ENCODE measurements at regions of chr19 and their contacts with region 1.

Region 1: DNA sequence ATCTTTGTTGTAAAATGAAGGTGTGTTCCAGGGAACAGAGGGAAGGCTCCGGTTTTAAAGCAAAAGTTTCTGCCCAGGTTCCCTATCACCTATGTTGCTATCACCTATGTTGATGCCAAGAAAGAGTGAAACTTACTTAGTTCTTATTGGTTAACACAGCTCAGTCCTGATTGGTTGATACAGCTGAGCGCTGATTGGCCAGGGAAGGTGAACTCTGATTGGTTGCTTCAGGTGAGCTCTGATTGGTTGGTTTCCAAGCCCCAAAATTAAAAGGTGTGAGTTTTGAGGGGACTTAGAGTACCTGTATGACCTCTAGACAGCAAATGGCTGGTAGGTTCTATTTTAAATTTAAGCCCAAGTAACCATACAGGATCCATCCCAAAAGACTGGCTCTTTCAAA is 42.2 kb downstream of the FPR3 start:
- DNase-seq: no peak
- H3K4me3 ChIP-seq: no peak overlapping the region
- H3K27ac ChIP-seq: no peak overlapping the region
- H3K4me1 ChIP-seq: no peaks in the 10 kb centered on the region
- H3K27me3 ChIP-seq: no peaks in the 10 kb centered on the region
- CTCF ChIP-seq: no peak
- EP300 ChIP-seq: no peak
- POLR2A ChIP-seq: no peak

Region 2: DNA sequence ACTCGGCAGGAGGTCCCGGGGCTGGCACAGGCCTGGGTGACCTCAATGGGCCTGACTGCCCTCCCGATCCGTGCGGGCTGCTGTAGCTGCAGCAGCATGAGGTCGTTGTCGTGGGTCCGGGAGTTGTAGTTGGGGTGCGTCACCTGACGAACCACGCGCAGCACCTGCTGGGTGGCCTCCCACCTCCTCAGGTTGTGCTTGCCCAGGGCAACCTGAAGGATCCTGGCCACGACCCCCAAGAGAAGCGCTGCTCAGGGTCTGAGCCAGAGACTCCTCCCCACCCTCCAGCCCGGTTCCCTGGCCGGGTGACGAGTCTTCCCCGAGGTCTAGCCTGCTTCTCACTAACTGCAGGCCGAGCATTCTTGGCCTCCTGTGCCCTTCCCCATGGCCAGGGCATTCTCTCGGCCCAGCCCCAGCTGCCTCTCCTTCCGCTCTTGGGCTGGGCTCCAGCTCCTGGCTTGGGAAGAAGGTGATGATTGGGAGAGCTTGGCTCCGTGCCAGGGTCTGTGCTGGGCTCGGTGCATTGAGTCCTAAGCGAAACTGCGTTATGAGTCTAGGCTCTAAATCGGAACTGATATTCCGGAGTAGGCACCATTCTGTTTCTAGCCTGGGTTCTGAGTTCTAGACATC is 757.5 kb before region 1 on chr19:
- in situ Hi-C with region 1: no loop called
- intact Hi-C with region 1: no loop called
- DNase-seq: no peak
- H3K4me3 ChIP-seq: no peak overlapping the region
- H3K27ac ChIP-seq: no peak overlapping the region
- H3K4me1 ChIP-seq: no peaks in the 10 kb centered on the region
- H3K27me3 ChIP-seq: peaks cover 10% of the 10 kb centered on the region
- CTCF ChIP-seq: no peak
- EP300 ChIP-seq: no peak
- POLR2A ChIP-seq: no peak

Region 3: GRCh38 chr19:51861870-51862622 is 24.9 kb after region 1 on chr19:
- in situ Hi-C with region 1: no loop called
- intact Hi-C with region 1: loop called (anchors 1 kb)
- DNase-seq: no peak
- H3K4me3 ChIP-seq: no peak overlapping the region
- H3K27ac ChIP-seq: no peak overlapping the region
- H3K4me1 ChIP-seq: no peaks in the 10 kb centered on the region
- H3K27me3 ChIP-seq: no peaks in the 10 kb centered on the region
- CTCF ChIP-seq: no peak
- EP300 ChIP-seq: no peak
- POLR2A ChIP-seq: no peak